ENCODE measurements at regions of chr17 and their contacts with region 1.

Region 1: DNA sequence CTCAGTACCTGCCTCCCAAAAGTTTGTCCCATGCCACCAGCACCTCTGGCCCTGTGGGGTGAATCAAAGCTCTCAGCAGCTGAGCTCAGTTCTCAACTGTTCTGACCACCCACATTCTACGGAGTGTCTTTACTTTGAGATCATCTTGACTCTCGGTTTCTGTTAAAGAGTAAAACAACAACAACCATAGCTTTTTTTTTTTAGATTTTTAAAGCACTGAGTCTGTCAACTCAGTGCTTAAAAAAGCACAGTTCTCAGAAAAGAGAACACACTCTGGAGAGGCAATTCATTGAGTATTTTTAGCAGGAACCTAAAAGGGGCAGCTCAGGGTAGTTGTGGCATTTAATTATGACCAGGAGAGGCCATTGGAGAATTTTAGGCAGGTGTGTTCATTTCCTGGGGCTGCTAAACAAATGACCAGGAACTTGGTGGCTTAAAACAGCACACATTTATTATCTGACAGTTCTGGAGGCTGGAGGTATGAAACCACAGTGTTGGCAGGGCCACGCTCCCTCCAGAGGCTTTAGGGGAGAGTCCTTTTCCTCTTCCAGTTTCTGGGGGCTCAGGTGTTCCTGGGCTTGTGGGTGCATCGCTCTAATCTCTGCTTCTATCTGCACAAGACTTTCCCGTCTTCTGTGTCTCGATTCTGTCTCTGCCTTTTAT is 6.7 kb upstream of the WFIKKN2 start:
- DNase-seq: no peak
- ATAC-seq: no peak
- H3K4me3 ChIP-seq: no peak overlapping the region
- H3K27ac ChIP-seq: no peak overlapping the region
- H3K4me1 ChIP-seq: no peaks in the 10 kb centered on the region
- H3K27me3 ChIP-seq: no peaks in the 10 kb centered on the region
- CTCF ChIP-seq: no peak

Region 2: GRCh38 chr17:50758989-50759544 is 69.6 kb before region 1 on chr17:
- intact Hi-C with region 1: no loop called
- DNase-seq: no peak
- ATAC-seq: peak in 3 of 4 donors; percentile 10 to 12 (median 10)
- H3K4me3 ChIP-seq: no peak overlapping the region
- H3K27ac ChIP-seq: no peak overlapping the region
- H3K4me1 ChIP-seq: no peaks in the 10 kb centered on the region
- H3K27me3 ChIP-seq: no peaks in the 10 kb centered on the region
- CTCF ChIP-seq: no peak

Region 3: DNA sequence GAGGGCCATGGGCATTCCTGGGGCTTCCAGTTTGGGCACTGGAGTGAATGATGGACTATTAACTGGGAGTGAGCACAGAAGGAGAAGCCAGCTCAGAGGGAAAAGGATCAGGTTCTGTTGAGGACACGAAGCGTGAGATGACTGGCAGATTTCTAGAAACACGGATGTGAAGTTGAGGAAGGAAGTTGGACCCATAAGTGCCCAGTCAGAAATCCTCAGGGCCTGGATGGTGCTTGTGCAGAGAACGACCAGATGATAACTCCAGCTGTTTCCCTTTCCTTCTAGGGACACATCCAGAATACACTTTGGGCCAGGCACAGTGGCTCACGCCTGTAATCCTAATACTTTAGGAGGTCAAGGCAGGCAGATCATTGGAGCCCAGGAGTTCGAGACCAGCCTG is 38.0 kb before region 1 on chr17:
- intact Hi-C with region 1: loop called in 1 of 2 experiments (anchors 5 kb)
- DNase-seq: no peak
- ATAC-seq: no peak
- H3K4me3 ChIP-seq: no peak overlapping the region
- H3K27ac ChIP-seq: no peak overlapping the region
- H3K4me1 ChIP-seq: no peaks in the 10 kb centered on the region
- H3K27me3 ChIP-seq: no peaks in the 10 kb centered on the region
- CTCF ChIP-seq: no peak

Region 4: DNA sequence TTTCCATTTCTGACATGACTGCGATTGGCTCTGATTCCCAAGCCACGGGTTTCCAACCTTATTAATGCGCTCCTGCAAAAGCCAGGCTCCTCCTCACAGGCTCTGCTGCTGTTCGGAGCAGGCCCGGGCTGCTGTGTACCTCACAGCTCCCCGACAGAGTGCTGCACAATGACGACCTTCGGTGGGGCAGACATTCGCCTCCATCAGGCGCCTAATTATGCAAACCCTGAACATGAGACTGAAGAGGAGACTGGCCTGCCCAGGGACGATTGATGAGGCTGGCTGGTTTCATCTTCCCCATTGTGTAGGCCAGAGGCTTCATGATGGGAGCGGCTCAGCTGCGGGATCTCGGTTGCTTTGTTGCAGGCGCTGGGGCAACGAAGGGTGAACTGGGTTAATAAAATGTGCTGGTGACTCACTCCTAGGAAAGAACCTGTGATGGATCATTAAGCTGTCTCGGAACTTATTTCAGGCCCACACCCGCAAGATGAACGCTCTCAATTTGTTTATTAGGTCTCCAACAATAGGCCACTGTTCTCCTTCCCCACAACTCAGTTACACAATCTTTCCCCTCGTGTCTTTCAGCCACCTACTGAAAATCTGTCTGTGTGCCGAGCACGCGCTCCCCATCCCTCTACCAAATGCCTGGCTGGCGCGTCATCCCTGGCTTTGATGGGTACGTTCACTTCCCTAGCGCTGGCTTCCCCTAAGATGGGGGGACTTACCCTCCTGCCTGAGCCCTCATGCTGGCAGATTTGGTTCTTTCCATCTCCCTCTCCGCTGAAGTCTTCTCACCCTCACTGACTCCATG is 64.7 kb after region 1 on chr17:
- intact Hi-C with region 1: no loop called
- DNase-seq: no peak
- ATAC-seq: peak; percentile 17 to 71 (median 67)
- H3K4me3 ChIP-seq: no peak overlapping the region
- H3K27ac ChIP-seq: no peak overlapping the region
- H3K4me1 ChIP-seq: peaks cover 3% of the 10 kb centered on the region
- H3K27me3 ChIP-seq: no peaks in the 10 kb centered on the region
- CTCF ChIP-seq: no peak

Region 5: DNA sequence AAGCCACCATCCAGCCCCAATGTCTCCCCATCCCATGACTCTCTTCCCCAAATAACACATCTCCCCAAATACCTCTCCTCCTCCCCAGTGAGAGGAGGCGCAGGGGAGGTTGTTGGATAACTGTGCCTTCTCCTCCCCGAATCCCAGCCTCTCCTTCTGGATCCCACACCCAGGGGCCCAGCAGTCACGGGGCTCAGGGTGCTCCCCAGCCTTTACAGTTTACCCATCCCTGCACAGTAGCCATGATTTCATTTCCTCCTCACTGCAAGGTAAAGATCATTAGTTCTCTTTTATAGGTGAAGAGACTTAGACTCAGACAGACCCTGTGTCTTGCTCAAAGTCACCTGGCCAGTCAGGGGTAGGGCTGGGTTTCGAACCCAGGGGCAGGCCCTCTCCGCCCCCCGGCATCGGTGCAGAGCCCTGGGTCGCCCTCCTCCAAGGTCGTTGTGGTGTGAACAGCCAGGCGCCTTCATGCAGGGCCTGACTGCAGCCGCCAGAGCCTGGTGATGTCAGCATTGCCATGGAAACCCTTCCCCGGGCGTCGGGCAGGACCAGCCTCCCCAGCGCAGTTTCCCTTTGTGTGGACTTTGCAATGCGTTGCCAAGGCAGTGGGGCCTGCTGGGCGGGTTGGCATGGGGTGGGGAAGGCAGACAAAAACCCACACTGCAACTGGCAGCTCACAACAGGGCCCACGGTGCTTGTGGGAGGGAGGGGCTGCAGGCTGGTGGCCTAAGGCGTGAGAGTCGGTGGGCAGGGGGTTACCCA is 90.9 kb after region 1 on chr17:
- intact Hi-C with region 1: no loop called
- DNase-seq: peak; percentile 67 to 82
- ATAC-seq: peak; percentile 40 to 66 (median 59)
- H3K4me3 ChIP-seq: no peak overlapping the region
- H3K27ac ChIP-seq: no peak overlapping the region
- H3K4me1 ChIP-seq: peaks cover 34% of the 10 kb centered on the region
- H3K27me3 ChIP-seq: no peaks in the 10 kb centered on the region
- CTCF ChIP-seq: no peak

Region 6: DNA sequence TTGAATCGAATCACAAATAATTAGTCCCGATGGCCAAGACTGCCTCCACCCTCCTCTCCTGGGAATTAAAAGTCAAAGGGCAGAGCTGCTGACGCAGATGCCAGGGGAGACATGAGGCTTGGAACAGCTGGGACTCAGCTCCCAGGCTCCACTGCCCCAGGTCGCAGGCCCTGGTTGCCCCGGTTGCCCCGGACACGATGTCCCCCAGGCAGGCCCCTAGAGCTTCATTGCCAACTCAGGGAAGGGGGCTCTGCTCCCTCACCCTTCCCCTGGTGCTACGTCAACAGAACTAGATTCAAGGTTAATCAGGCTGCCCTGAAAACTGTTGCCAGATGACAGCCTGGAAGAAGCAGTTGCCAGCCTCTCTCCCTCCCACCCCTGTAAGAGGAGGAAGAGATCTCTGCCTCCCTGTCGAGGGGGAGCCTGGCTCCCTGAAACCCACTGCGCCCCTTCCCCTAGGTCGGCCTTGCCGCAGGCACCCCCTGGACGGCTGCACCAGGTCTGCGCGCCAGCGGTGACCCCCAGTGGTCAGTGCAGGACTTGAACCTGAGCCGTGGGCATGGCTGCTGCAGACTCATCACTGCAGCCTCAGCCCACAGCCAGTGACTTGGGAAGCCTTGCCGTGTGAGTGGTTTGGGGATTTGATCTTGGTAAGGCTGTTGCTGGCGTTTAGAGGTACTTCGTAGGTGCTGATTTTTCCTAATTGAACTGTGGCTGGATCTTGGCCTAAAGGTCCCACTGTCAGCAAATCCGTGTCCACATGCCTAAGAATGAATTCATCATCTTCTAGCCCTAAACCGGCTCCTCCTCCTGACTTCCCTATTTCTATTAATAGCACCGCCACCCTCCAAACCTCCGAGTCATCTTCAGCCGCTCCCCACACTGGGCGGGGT is 121.6 kb after region 1 on chr17:
- intact Hi-C with region 1: no loop called
- DNase-seq: peak; percentile 86 to 93
- ATAC-seq: peak; percentile 63 to 78 (median 73)
- H3K4me3 ChIP-seq: peak overlapping the region; percentile 48
- H3K27ac ChIP-seq: peak overlapping the region; percentile 98
- H3K4me1 ChIP-seq: peaks cover 90% of the 10 kb centered on the region
- H3K27me3 ChIP-seq: no peaks in the 10 kb centered on the region
- CTCF ChIP-seq: peak; percentile 78

Measured in psoas muscle (tissue), 8 donors.